Psoas muscle (tissue), 8 donors: ENCODE measurements at regions of chr15 and their contacts with region 1.

Region 1: GRCh38 chr15:32067115-32067514 is 36.8 kb downstream of the CHRNA7 start:
- DNase-seq: no peak
- ATAC-seq: no peak
- H3K4me3 ChIP-seq: no peak overlapping the region
- H3K27ac ChIP-seq: no peak overlapping the region
- H3K4me1 ChIP-seq: no peaks in the 10 kb centered on the region
- H3K27me3 ChIP-seq: no peaks in the 10 kb centered on the region
- CTCF ChIP-seq: no peak

Region 2: DNA sequence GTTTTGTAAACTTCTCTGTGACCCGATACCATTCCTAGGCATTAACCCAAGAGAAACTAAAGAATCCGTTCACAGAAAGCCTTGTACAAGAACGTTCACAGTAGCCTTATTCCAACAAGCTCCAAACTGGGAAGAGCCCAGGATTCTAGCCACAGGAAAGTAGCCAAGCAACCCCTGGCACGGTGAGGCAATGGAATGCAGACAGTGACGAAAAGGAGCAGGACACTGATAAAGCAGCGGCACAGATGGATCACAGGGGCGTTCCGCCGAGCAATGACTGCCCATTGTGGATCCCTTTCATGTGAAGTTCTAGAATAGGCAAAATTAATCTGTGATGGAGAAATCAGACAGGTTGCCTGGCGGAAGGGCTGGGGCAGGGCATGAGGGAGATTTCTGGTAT is 235.5 kb before region 1 on chr15:
- intact Hi-C with region 1: no loop called
- DNase-seq: no peak
- ATAC-seq: no peak
- H3K4me3 ChIP-seq: no peak overlapping the region
- H3K27ac ChIP-seq: no peak overlapping the region
- H3K4me1 ChIP-seq: no peaks in the 10 kb centered on the region
- H3K27me3 ChIP-seq: no peaks in the 10 kb centered on the region
- CTCF ChIP-seq: no peak

Region 3: DNA sequence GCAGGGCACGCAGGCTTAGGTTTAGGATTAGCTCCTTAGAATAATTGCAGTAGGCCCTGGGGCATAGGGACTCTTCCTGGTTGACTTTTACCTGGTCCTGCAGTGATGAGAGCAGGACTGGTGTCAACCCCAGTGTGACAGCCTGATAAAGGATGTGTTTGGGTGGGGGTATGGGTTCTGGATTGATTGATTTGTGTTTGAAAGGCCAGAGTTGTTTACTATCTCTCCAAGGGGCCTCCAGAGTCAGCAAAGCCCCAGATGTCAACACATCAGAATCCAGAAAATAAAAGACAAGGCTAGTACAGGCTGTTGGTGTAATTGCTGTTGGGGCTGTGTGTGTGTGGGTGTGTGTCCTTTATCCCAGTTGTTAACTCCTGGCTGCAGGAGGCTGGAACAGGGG is 85.5 kb after region 1 on chr15:
- intact Hi-C with region 1: loop called in 1 of 2 experiments (anchors 10 kb)
- DNase-seq: no peak
- ATAC-seq: no peak
- H3K4me3 ChIP-seq: no peak overlapping the region
- H3K27ac ChIP-seq: no peak overlapping the region
- H3K4me1 ChIP-seq: no peaks in the 10 kb centered on the region
- H3K27me3 ChIP-seq: no peaks in the 10 kb centered on the region
- CTCF ChIP-seq: no peak